ENCODE measurements at regions of chr9 and their contacts with region 1.

Region 1: GRCh38 chr9:34500623-34501267 is 22.0 kb downstream of the ENHO start:
- H3K4me3 ChIP-seq: no peak overlapping the region
- H3K27ac ChIP-seq: no peak overlapping the region
- H3K4me1 ChIP-seq: no peaks in the 10 kb centered on the region
- CTCF ChIP-seq: peak; percentile 58

Region 2: GRCh38 chr9:34332076-34332964 is 168.4 kb before region 1 on chr9:
- CTCF ChIA-PET with region 1: interaction called, 41 read pairs
- POLR2A ChIA-PET with region 1: no interaction called
- H3K4me3 ChIP-seq: no peak overlapping the region
- H3K27ac ChIP-seq: no peak overlapping the region
- H3K4me1 ChIP-seq: no peaks in the 10 kb centered on the region
- CTCF ChIP-seq: peak; percentile 48; the same call in 1 of the 2 replicates

Region 3: DNA sequence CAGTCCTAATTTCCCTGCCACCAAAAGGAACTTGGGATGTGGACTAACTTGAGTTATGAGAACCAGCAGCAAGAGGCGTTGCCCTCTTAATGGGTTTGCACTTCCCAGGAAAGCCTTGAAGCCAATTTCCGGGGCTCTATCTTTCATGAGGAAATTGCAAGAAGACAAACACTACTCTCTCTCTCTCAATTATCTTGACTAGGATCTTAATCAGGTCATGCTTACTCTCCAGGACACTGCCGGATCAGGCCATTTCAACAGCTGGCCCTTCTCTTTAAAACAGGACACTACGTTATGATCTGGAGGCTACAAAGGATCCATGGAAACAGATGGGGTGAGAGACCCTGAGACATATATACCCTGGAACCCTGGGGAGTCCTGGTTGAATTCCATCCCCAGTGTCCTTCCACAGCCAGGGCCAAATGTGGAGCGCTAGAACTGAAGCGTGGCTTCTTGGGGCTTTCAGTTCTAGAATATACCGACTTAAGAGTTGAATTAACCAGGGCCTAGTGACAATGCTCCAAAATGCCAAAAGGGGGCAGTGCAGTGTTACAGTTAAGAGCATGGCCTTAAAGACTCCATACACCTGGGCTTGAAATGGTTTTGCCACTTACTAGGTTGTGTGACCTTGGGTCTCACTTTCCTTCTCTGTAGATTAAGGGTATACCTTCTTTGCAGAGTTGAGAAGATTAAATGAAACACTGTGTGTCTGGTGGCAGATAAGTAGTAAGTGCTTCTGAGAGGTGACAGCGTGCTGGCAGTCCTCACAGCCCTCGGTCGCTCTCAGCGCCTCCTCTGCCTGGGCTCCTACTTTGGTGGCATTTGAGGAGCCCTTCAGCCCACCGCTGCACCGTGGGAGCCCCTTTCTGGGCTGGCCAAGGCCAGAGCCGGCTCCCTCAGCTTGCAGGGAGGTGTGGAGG is 63.5 kb before region 1 on chr9:
- CTCF ChIA-PET with region 1: interaction called, 30 read pairs
- POLR2A ChIA-PET with region 1: no interaction called
- H3K4me3 ChIP-seq: no peak overlapping the region
- H3K27ac ChIP-seq: no peak overlapping the region
- H3K4me1 ChIP-seq: no peaks in the 10 kb centered on the region
- CTCF ChIP-seq: 0 out of 2 replicates have a peak, but pooled peaks have one; percentile 14

Region 4: DNA sequence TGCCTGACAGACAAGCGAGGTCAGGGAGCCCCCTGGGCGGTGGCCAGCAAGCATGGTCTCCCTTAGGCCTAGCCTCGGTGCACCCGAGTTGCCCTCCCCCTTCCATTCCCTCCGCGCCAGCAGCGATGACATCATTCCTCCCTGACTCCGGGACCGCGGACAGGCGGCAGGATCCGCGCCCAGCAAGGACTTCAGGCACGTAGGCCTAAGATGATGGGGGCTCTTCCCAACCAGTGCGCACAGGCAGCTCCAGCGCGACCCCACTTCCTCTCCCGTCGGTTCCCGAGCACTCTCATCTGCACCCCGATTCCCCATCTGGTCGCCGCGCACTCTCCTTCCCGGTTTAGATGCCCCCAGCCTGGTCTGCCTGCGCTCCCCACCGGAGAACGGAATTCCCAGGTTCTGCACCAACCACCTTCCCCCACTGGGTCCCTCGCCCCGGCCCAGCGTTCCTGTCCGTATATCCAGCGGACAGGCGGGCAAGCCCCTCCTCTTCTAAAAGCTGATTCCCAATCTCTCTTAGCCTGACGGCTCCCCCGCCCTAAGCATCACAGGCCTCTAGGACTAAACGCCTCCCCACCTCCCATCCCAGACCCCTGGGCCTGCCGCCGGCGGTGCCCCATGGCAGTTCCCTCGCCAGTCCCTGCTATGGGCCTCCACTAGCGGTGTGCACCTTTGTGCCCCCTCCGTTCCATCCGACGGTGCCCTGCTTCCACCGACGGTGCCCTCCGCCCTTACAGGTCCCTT is 43.3 kb before region 1 on chr9:
- CTCF ChIA-PET with region 1: interaction called, 16 read pairs
- POLR2A ChIA-PET with region 1: no interaction called
- H3K4me3 ChIP-seq: peak overlapping the region; percentile 63
- H3K27ac ChIP-seq: peak overlapping the region; percentile 77
- H3K4me1 ChIP-seq: peaks cover 2% of the 10 kb centered on the region; the same call in 1 of the 2 replicates
- CTCF ChIP-seq: peak; percentile 6; the same call in 1 of the 2 replicates

Region 5: DNA sequence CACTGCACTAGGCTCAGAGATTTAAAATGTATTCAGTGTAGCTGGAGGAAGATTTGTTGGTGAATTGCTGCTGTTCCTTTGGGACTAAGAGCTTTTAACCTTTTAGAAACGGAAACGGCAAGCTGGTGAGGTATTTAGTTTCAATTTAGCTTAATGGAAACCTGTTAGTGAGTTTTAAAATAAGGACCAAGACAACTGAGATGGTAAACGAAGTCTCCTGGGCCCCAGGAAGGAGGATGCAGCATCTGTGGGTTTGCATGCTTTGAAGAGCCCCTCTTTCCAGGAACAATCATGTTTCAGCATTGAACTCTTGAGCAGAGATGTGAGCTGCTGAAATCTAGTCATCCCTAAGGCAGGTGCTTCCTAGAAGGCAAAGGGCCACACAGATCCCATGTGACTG is 25.6 kb before region 1 on chr9:
- CTCF ChIA-PET with region 1: interaction called, 10 read pairs
- POLR2A ChIA-PET with region 1: no interaction called
- H3K4me3 ChIP-seq: no peak overlapping the region
- H3K27ac ChIP-seq: no peak overlapping the region
- H3K4me1 ChIP-seq: no peaks in the 10 kb centered on the region
- CTCF ChIP-seq: no peak

Region 6: GRCh38 chr9:34546834-34547827 is 46.4 kb after region 1 on chr9:
- CTCF ChIA-PET with region 1: interaction called, 13 read pairs
- POLR2A ChIA-PET with region 1: no interaction called
- H3K4me3 ChIP-seq: no peak overlapping the region
- H3K27ac ChIP-seq: no peak overlapping the region
- H3K4me1 ChIP-seq: no peaks in the 10 kb centered on the region
- CTCF ChIP-seq: peak; percentile 38; the same call in 1 of the 2 replicates

Measured in HEK293 (cell line).